Right ventricle myocardium inferior (tissue), 1 donor: ENCODE measurements at regions of chr15 and their contacts with region 1.

Region 1: DNA sequence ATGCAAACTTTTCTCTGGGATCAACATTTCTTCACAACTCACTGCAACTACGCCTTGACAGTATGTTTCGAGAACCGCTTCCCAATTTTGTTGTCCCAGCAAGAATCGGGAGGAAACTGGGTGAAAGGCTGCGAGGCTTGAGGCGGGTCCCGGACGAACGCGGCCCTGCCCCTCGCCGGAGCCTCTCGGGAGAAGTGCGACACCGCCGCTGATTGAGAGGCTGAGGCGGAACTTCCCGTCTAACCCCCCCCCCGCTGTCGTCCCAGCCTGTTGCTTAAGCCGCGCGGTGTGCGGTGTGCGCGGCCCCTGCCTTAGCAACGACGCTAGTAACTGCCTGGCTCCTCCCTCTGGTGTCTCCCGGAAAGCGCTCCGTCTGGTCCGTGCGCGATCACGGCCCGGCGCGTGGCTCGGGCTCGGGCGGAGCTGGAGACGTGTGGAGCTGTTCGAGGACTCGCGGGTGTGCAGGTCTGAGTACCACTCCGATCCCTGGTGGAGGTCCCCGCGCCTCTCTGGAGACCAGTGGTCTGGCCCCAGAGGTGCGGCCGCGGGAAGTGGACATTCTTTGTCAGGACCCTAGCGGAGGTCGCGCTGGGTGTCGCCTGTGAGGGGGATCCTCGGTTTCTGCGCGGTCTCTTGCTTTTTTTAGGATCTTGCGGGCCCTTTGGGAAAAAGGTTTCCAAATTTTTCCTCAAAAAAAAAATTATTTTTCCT is at the starts of genes DTWD1 and FAM227B:
- DNase-seq: peak; percentile 98
- ATAC-seq: peak; percentile 100
- total RNA-seq, gene DTWD1: 22.1 TPM
- total RNA-seq, gene FAM227B: 19.8 TPM

Region 2: DNA sequence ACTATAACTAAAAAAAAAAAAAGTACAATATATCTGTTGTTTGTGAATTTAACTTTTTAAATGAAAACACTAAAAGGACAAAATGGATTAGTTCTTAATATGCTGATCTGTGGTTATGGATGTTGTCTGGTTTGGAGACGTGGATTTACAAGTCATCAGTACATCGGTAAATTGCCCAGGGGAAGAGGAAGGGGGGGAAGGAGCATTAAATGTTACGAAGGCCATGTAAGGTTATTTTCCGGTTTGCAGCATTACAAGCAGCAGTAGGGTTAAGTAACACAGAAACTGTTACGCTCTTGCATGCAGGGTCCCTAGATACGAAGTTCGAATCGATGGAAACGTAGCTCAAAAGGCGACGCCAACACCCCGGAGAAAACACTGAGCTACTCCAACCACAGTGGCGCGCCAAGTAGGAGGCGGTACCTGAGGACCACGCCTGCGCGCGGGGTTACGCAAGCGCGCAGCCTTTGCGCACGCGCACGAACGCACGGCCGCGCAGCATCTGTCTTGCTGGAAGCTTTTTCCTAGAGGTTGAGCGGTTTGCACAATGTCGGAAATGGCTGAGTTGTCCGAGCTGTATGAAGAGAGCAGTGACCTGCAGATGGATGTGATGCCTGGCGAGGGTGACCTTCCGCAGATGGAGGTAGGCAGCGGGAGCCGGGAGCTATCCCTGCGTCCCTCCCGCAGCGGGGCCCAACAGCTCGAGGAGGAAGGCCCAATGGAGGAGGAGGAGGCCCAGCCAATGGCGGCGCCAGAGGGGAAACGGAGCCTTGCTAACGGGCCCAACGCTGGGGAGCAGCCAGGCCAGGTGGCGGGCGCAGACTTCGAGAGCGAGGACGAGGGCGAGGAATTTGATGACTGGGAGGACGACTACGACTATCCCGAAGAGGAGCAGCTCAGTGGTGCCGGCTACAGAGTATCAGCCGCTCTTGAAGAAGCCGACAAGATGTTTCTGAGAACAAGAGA is 742.9 kb before region 1 on chr15 and contains the start of gene EID1:
- intact Hi-C with region 1: loop called (anchors 10 kb)
- DNase-seq: peak; percentile 95
- ATAC-seq: peak; percentile 99
- total RNA-seq, gene EID1: 201 TPM

Region 3: DNA sequence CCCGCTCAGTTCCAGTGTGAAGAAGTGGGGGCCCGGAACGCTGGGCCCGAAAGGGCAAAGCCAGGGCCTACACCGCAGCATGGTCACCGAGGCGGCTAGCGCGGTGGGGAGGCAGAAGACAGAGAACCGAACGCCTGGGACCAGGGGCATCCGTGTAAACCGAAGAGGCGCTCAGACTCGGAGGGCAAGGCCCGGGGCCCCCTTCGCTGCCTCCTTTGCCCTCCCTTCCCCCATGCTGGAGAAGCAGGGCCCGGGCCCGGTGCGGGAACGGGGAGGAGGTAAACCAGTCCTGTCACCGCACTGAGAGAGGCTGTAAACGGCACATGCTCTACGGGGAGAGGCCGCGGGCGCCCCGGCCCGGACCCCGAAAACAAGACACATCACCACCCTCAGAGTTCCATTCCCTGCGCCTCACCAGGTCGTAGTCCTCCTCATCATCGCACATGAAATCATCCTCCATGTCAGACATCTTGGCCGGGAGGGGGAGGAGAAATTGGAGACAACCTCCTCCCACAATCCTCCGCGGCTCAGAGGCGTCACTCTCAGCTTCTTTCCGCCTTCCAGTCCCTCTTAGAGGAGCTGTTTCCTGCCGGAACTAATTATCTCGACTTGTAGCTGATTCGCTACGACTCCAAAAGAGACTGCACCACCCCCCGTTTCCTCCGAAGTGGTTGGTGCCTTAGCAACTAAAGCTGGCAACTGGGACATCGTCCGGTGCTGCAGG is 465.5 kb before region 1 on chr15 and contains the start of gene COPS2:
- intact Hi-C with region 1: loop called (anchors 10 kb)
- DNase-seq: peak; percentile 91
- ATAC-seq: peak; percentile 99
- total RNA-seq, gene COPS2: 77.0 TPM

Region 4: GRCh38 chr15:49428409-49429095 is 192.3 kb before region 1 on chr15:
- intact Hi-C with region 1: loop called (anchors 2 kb)
- DNase-seq: peak; percentile 54
- ATAC-seq: peak; percentile 91

Region 5: GRCh38 chr15:49558924-49559323 is 61.9 kb before region 1 on chr15:
- intact Hi-C with region 1: no loop called
- DNase-seq: no peak
- ATAC-seq: no peak

Region 6: DNA sequence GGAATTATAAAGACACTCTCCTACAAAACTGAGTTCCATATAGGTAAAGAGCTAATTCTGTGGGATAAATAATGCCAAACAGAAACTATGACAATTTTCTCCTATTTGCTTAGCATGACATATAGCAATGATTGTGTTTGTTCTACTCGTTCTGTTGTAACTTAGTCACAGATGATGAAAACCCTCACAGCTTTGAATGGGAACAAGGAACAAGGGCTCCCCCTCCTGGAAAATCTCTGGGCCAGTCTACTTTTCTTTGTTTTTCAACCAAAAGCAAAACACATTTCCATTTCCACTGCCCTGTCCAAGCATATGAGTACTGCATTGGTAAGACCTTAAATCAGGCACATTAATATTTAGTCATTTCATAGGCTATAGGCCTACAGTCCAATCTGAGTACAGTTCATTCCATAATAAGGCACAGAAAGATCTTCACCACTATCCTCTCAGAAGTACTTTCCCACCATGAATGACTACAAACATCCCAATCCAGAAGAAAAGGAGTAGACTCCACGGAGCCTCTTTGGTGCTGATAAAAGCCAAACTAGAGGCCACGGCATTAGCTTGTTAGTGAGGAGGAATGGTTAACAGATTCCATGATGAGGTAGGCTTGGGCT is 431.1 kb after region 1 on chr15:
- intact Hi-C with region 1: loop called (anchors 2 kb)
- DNase-seq: no peak
- ATAC-seq: no peak